Cardiac septum (tissue), 1 donor: ENCODE measurements at regions of chr3 and their contacts with region 1.

Region 1: DNA sequence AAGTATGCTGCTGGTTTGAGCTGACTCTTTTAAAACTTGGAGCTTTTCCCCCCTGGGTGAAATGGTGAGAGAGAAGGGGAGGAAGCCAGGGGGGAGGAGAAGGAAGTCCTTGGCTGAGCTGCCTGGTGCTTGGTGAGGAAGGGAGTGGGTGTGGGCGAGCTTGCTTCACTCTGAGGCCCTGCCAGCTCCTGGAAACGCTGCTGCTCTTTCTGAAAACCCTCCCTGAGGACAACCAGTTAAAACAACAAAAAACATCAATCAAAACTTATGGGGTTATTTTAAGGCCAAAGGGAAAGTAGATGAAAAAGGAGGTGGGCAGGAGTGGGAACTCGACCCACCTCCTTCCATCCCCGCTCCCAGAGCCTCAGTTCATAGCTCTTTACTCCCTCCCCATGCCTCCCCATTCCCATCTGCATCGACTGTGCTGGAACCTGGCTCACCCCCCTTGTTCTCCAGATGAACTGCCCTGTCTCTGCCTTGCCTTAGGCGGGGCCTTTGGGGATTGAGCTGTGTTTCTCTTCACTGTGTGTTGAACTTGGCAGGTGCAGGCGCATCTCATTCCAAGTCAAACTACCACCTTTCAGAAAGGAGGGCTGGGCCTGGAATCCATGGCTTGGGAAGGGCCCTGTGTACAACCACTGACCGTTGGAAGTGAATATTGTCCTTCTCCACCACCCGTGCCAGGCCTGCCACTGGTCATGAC is 166.1 kb downstream of the ZNF621 start:
- DNase-seq: peak; percentile 81

Region 2: GRCh38 chr3:40843851-40844548 is 153.1 kb after region 1 on chr3:
- intact Hi-C with region 1: no loop called
- DNase-seq: no peak

Region 3: DNA sequence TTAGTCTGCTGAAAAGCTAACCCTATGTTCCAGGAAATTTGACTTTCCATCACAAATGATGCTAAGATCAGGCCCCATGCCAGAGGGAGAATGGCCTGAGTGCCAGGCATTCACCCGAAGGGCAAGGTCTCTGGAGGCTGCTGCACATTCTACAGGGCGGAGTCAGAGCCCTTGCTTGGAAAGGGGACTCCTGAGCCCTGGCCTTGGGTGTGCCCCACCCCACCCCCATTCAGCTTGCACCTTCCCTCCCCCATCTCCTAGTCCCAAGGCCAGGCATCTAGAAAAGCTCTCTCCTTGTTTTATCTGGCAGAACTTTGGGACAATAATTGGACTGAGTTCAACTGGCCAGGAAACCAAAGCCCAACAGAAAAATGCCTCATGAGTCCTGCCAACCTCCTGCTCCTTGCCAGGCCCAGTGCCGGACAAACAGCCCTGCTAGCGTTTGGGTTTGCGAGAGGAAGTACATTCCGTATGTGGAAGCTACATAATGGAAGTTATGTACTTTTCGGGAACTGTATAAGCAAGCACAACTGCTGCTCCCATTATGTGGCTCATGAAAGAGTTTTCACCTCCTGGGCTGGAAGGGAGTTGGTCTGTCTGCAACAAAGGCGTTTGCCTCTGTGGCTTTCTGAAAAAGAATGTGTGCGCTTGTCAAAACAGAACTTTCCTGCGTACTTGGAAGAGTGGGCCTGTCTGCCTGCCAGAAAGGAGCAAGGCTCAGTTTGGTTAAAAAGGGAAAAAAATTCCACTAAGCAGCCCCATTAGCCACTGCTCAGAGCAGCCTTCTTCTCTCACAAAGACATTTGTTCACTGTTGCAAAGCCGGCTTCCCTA is 186.9 kb after region 1 on chr3:
- intact Hi-C with region 1: loop called (anchors 5 kb)
- DNase-seq: peak; percentile 82